CD8-positive, alpha-beta T cell (primary cell): ENCODE measurements at regions of chr2 and their contacts with region 1.

Region 1: DNA sequence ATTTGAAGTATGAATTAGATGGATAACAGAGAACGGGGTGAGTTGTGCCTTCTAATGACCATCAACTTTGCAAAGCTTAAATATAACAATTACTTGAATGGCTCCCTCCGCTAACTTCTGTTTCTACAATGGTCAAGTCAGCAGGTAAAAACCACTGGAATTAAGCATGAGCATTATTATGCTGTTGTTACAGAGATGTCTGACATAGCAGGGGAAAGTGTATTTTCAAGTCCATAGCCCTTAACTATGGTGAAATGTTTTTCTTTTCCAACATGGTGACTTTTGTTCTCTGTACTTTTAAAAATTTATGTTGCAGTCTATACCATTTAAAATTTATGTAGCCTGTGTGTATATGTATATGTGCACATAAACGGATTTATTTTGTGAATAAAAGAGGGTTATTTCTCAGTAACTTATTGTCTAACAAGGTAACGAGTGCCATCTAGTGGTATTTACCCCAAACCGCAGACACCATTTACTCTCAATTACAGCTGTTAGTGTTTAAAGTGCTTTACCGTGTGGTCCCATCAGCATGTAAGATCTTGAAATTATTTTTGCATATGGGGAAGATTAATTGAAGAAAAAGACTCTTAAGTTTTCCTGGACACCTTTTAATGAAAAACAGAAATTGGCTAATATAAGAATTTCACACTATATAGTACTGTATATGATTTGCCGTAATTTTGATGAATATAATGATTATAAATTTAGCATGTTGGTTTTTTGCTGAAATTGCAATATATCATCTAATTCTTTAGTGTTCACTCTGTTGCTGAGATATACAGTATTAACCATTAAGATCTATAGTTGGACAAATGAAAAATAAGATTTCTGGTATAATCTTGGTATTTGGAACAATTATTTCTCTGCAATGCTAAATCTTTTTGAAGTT is 78.2 kb downstream of the UBE2E3 start:
- DNase-seq: peak in 8 of 9 experiments; percentile 2 to 69 (median 32)
- ATAC-seq: peak; percentile 57
- H3K4me3 ChIP-seq: no peak overlapping the region
- H3K4me3 Mint-ChIP-seq: no peak overlapping the region
- H3K27ac ChIP-seq: no peak overlapping the region
- H3K27ac Mint-ChIP-seq: no peak overlapping the region
- H3K4me1 ChIP-seq: no peaks in the 10 kb centered on the region
- H3K4me1 Mint-ChIP-seq: peaks cover 4% of the 10 kb centered on the region
- H3K27me3 ChIP-seq: no peaks in the 10 kb centered on the region
- H3K27me3 Mint-ChIP-seq: no peaks in the 10 kb centered on the region
- CTCF ChIP-seq: peak; percentile 95

Region 2: DNA sequence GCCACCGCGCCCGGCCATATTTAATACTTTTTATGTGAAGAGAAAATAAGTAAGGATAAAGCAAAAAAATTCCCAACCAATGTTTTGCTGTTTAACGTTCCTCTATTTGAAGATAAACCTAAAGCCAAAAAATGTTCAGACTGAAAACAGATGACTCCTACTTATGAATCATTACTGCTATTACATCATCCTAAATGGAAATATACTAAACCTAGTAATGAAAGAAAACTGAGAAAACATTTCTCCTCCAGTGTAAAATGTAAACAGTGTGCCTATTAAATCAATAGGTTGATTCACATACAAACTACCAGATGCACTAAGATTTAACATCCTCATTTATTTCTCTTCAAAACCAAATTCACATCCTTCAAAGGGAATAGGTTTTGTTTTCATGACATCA is 1095.0 kb before region 1 on chr2:
- CTCF ChIA-PET with region 1: no interaction called
- POLR2A ChIA-PET with region 1: no interaction called
- intact Hi-C with region 1: loop called in 1 of 2 experiments (anchors 10 kb)
- DNase-seq: no peak
- ATAC-seq: no peak
- H3K4me3 ChIP-seq: no peak overlapping the region
- H3K4me3 Mint-ChIP-seq: no peak overlapping the region
- H3K27ac ChIP-seq: no peak overlapping the region
- H3K27ac Mint-ChIP-seq: no peak overlapping the region
- H3K4me1 ChIP-seq: no peaks in the 10 kb centered on the region
- H3K4me1 Mint-ChIP-seq: peaks cover 3% of the 10 kb centered on the region
- H3K27me3 ChIP-seq: no peaks in the 10 kb centered on the region
- H3K27me3 Mint-ChIP-seq: no peaks in the 10 kb centered on the region
- CTCF ChIP-seq: no peak

Region 3: DNA sequence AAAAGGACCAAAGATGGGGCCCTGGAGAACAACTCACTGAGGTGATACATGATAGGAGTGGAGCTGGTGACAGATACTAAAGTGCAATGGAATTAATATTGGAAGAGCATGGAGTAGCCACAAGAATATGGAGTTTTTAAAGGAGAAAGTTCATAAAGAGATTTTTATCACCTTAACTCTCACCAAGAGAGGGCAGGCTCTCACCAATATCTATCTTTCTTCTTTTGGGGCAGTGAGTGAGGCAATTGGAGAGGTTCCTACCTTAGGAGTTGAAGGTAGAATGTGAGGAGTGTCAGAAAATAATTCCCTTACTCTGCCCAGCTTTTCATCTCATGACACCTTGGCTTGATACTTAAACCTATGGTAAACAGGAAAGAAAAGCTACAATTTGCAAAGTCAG is 817.9 kb before region 1 on chr2:
- CTCF ChIA-PET with region 1: no interaction called
- POLR2A ChIA-PET with region 1: no interaction called
- intact Hi-C with region 1: loop called in 1 of 2 experiments (anchors 2 kb)
- DNase-seq: no peak
- ATAC-seq: no peak
- H3K4me3 ChIP-seq: no peak overlapping the region
- H3K4me3 Mint-ChIP-seq: no peak overlapping the region
- H3K27ac ChIP-seq: no peak overlapping the region
- H3K27ac Mint-ChIP-seq: no peak overlapping the region
- H3K4me1 ChIP-seq: no peaks in the 10 kb centered on the region
- H3K4me1 Mint-ChIP-seq: no peaks in the 10 kb centered on the region
- H3K27me3 ChIP-seq: no peaks in the 10 kb centered on the region
- H3K27me3 Mint-ChIP-seq: no peaks in the 10 kb centered on the region
- CTCF ChIP-seq: no peak

Region 4: GRCh38 chr2:180604077-180604476 is 454.5 kb before region 1 on chr2:
- CTCF ChIA-PET with region 1: no interaction called
- POLR2A ChIA-PET with region 1: no interaction called
- intact Hi-C with region 1: loop called (anchors 2 to 5 kb)
- DNase-seq: peak in 2 of 9 experiments; percentile 23 to 26
- ATAC-seq: no peak
- H3K4me3 ChIP-seq: no peak overlapping the region
- H3K4me3 Mint-ChIP-seq: no peak overlapping the region
- H3K27ac ChIP-seq: no peak overlapping the region
- H3K27ac Mint-ChIP-seq: no peak overlapping the region
- H3K4me1 ChIP-seq: no peaks in the 10 kb centered on the region
- H3K4me1 Mint-ChIP-seq: no peaks in the 10 kb centered on the region
- H3K27me3 ChIP-seq: no peaks in the 10 kb centered on the region
- H3K27me3 Mint-ChIP-seq: no peaks in the 10 kb centered on the region
- CTCF ChIP-seq: no peak

Region 5: DNA sequence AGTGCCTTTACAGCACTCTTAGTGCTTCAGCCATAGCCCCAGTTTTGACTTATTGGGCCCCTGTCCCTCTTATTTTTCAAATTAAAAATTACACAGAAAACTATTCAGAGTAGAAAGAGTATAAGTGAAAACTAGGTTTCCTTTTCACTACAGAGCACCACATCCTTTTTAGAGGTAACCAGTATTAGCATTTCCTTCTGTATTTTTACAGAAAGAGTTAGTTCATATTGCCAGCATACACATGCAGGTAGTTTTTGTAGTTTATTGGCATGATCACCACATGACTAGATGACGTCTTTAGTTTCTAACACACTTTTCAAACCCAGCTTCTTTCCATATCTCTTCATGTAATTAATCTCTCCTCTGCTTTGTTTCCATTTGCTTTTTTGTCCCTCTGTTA is 11.8 kb before region 1 on chr2:
- CTCF ChIA-PET with region 1: interaction called, 13 read pairs
- POLR2A ChIA-PET with region 1: no interaction called
- intact Hi-C with region 1: no loop called
- DNase-seq: no peak
- ATAC-seq: peak; percentile 40
- H3K4me3 ChIP-seq: no peak overlapping the region
- H3K4me3 Mint-ChIP-seq: no peak overlapping the region
- H3K27ac ChIP-seq: no peak overlapping the region
- H3K27ac Mint-ChIP-seq: no peak overlapping the region
- H3K4me1 ChIP-seq: no peaks in the 10 kb centered on the region
- H3K4me1 Mint-ChIP-seq: peaks cover 12% of the 10 kb centered on the region
- H3K27me3 ChIP-seq: no peaks in the 10 kb centered on the region
- H3K27me3 Mint-ChIP-seq: no peaks in the 10 kb centered on the region
- CTCF ChIP-seq: no peak

Region 6: GRCh38 chr2:181165199-181165868 is 106.7 kb after region 1 on chr2:
- CTCF ChIA-PET with region 1: no interaction called
- POLR2A ChIA-PET with region 1: no interaction called
- intact Hi-C with region 1: no loop called
- DNase-seq: peak in 4 of 9 experiments; percentile 20 to 78 (median 42)
- ATAC-seq: peak; percentile 76
- H3K4me3 ChIP-seq: peak overlapping the region; percentile 9 to 11
- H3K4me3 Mint-ChIP-seq: peak overlapping the region; percentile 70
- H3K27ac ChIP-seq: peak overlapping the region; percentile 36 to 90
- H3K27ac Mint-ChIP-seq: peak overlapping the region; percentile 95
- H3K4me1 ChIP-seq: peaks cover 45% of the 10 kb centered on the region
- H3K4me1 Mint-ChIP-seq: peaks cover 64% of the 10 kb centered on the region
- H3K27me3 ChIP-seq: no peaks in the 10 kb centered on the region
- H3K27me3 Mint-ChIP-seq: no peaks in the 10 kb centered on the region
- CTCF ChIP-seq: no peak